Activated B cell treated with CpG ODN at 0.5 μM for 24 hours (primary cell): ENCODE measurements at regions of chr6 and their contacts with region 1.

Region 1: GRCh38 chr6:113662688-113663333 is 194.3 kb upstream of the MARCKS start:
- DNase-seq: no peak
- ATAC-seq: peak; percentile 90
- H3K4me3 Mint-ChIP-seq: peak overlapping the region; percentile 5
- H3K27ac Mint-ChIP-seq: no peak overlapping the region
- H3K4me1 Mint-ChIP-seq: peaks cover 21% of the 10 kb centered on the region
- H3K27me3 Mint-ChIP-seq: no peaks in the 10 kb centered on the region
- CTCF ChIP-seq: no peak

Region 2: GRCh38 chr6:113651120-113651519 is 11.7 kb before region 1 on chr6:
- CTCF ChIA-PET with region 1: no interaction called
- POLR2A ChIA-PET with region 1: no interaction called
- intact Hi-C with region 1: loop called (anchors 1 kb)
- DNase-seq: no peak
- ATAC-seq: no peak
- H3K4me3 Mint-ChIP-seq: peak overlapping the region; percentile 19
- H3K27ac Mint-ChIP-seq: no peak overlapping the region
- H3K4me1 Mint-ChIP-seq: peaks cover 72% of the 10 kb centered on the region
- H3K27me3 Mint-ChIP-seq: no peaks in the 10 kb centered on the region
- CTCF ChIP-seq: no peak